Left ventricle myocardium inferior (tissue), 1 donor: ENCODE measurements at regions of chr10 and their contacts with region 1.

Region 1: GRCh38 chr10:92087750-92088395 is 164.3 kb downstream of the BTAF1 start:
- DNase-seq: peak; percentile 30
- H3K4me3 ChIP-seq: no peak overlapping the region
- H3K27ac ChIP-seq: peak overlapping the region; percentile 42
- H3K4me1 ChIP-seq: peaks cover 49% of the 10 kb centered on the region
- H3K27me3 ChIP-seq: no peaks in the 10 kb centered on the region
- CTCF ChIP-seq: peak; percentile 84

Region 2: DNA sequence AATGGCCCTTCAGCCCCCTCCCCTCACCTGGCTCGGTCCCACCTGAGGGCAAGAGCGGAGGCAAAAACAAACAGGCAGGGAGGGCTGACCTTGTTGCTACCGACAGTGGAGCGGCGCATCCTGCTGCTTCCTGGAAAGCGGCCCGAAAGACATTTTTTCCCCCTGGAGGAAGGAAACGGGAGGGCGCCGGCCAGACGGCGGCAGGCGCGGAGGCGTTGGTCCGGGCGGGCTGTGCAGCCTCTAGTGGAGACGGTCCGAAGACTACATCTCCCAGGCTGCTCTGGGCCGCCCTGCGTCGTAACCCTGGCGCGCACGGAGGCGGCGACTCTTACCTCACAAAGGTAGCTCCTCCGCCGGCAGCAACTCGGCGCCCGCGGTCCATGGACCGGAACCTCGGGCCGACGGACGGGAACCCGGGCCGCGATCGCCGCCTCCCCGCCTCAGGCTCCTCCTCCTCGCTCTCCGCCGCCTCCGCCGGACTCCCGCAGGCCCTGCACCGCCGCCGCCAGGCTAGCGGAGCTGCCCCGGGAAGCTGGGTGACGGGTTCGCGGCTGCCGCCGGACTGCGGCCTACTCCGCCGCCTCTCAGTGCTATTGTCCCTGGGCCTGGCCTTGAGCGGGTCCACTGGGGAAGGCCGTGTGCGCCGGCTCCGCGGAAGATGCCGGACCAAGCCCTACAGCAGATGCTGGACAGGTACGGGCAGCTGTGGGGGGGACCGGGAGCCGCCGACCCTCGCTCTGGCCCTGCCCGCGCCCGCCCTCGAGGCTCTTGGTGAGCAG is 203.2 kb after region 1 on chr10 and contains the starts of genes CPEB3 and MARCHF5:
- intact Hi-C with region 1: loop called (anchors 10 kb)
- DNase-seq: peak; percentile 97
- H3K4me3 ChIP-seq: peak within 1 kb of the TSS; percentile 99
- H3K27ac ChIP-seq: peak within 1 kb of the TSS; percentile 97
- H3K4me1 ChIP-seq: peaks cover 49% of the 10 kb centered on the region
- H3K27me3 ChIP-seq: no peaks in the 10 kb centered on the region
- CTCF ChIP-seq: peak; percentile 79
- total RNA-seq, gene CPEB3: 13.6 TPM
- total RNA-seq, gene MARCHF5: 32.2 TPM

Region 3: DNA sequence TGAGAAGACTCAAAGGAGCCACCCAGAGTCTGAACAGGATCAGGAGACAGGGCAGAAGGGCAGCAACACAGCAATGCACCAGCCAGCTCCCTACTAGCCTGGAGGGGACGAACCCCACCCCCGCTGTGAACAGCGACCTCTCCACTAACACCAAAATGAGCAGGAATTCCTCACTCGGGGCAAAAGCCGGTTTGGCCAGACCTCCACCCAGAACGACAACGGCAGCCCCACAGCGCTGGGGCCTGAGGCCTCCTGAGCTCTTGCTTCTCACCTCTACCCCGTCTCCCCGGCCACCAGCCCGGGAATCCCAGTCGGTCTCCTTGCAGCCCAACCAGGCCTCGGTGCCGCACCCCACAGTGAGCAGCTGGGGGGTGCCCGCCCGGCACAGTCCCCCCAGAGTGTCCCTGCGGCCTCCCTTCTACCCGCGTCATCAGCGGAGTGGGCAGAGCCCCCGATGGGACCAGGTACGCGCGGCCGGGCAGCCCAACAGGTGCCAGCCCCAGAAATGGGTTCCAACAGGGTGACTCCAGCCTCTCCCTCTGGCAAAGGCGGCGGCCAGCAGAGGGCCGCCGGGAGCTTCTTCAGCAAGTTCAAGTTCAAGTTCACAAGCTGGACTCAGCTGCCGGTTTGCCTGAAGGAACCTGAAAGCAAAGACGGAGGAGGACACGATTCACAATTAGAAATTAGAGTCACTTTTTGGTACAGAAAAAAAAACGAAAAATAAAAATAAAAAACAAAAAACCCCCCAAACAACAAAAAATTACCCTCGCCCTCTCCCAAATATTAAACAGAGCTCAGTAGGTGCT is 332.1 kb after region 1 on chr10:
- intact Hi-C with region 1: loop called (anchors 10 kb)
- DNase-seq: peak; percentile 52
- H3K4me3 ChIP-seq: peak overlapping the region; percentile 66
- H3K27ac ChIP-seq: peak overlapping the region; percentile 25
- H3K4me1 ChIP-seq: peaks cover 8% of the 10 kb centered on the region
- H3K27me3 ChIP-seq: no peaks in the 10 kb centered on the region
- CTCF ChIP-seq: peak; percentile 58